ENCODE measurements at regions of chr19 and their contacts with region 1.

Region 1: DNA sequence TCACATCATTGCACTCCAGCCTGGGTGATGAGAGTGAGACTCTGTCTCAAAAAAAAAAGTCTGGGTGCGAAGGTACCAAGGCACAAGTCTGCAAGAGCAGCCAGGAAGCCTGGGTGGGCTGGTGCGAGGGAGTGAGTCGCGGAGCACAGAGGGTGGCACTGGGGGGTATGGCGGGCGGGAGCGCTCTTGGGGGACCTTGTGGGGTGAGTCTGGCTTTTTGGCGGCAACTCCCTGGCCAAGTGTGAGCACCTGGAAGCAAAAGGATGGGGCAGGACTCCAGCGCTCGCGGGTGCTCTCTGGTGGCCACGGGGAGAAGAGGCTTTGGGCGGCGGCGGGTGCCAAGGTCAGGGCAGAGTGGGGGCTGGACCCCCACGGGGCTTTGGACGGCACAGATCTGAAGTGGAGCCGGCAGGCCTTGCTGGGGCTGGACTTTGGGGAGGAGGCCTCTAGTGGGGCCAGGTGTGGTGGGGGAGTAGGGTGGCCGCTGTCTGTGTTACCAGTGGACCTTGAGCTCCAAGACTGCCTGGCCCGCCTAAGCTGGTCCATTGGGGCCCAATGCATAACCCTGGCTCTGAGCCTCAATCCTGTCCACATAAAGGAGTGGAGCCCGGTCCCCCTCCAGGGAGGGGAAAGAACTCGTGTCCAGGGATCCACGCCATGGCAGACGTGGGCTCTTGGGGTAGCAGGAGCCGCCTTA is 1.6 kb downstream of the P2RY11 start:
- DNase-seq: peak; percentile 55 to 86 (median 73)
- H3K4me3 ChIP-seq: no peak overlapping the region
- H3K4me3 Mint-ChIP-seq: peak overlapping the region; percentile 68 to 93 (median 86)
- H3K27ac ChIP-seq: peak overlapping the region; percentile 77
- H3K27ac Mint-ChIP-seq: peak overlapping the region; percentile 90 to 99 (median 98)
- H3K4me1 ChIP-seq: peaks cover 53% of the 10 kb centered on the region
- H3K4me1 Mint-ChIP-seq: peaks cover 27 to 80% (median 38%) of the 10 kb centered on the region in 3 donors
- H3K27me3 ChIP-seq: no peaks in the 10 kb centered on the region
- H3K27me3 Mint-ChIP-seq: peaks cover 0 to 5% of the 10 kb centered on the region in 2 donors

Region 2: GRCh38 chr19:9996541-9996940 is 116.5 kb before region 1 on chr19:
- CTCF ChIA-PET with region 1: no interaction called
- POLR2A ChIA-PET with region 1: no interaction called
- DNase-seq: no peak
- H3K4me3 ChIP-seq: no peak overlapping the region
- H3K4me3 Mint-ChIP-seq: no peak overlapping the region
- H3K27ac ChIP-seq: no peak overlapping the region
- H3K27ac Mint-ChIP-seq: peak overlapping the region in 3 of 8 donors; percentile 4 to 51 (median 21)
- H3K4me1 ChIP-seq: no peaks in the 10 kb centered on the region
- H3K4me1 Mint-ChIP-seq: peaks cover 2 to 8% (median 4%) of the 10 kb centered on the region in 3 donors
- H3K27me3 ChIP-seq: no peaks in the 10 kb centered on the region
- H3K27me3 Mint-ChIP-seq: peaks cover 21 to 37% of the 10 kb centered on the region in 2 donors

Region 3: DNA sequence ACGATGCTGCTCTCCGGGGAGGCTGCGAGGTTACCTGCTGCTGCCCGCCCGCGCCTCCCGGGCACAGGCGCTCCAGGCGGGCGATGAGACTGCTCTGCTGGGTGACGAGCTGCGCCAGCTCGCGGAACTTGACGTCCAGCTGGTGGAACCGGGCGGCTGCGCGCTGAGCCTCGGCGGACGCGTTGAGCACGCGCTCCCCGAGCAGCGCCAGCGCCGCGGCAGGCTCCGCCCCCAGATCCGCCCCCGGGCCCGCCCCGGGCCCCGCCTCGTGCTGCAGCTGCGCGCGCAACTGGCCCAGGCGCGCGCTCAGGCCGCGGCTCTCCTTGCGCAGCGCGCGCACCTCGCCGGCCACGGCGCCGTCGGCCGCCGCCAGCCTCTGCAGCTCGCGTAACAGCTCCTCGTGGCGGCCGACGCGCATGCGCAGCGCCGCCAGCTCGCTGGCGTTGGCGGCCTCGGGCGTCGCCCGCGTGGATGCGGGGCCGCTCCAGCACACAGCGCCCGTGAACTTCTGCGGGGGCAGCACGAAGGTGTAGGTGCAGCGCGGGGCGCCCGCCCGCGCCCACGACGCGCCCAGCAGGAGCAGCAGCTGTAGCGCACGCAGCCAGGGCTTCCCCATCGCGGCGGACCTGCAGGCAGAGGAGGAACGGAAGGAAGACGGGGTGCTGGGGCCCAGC is 17.0 kb before region 1 on chr19:
- CTCF ChIA-PET with region 1: interaction called, 194 read pairs
- POLR2A ChIA-PET with region 1: interaction called, 36 read pairs
- DNase-seq: peak; percentile 85 to 94 (median 89)
- H3K4me3 ChIP-seq: peak overlapping the region; percentile 60
- H3K4me3 Mint-ChIP-seq: peak overlapping the region in 5 of 7 donors; percentile 37 to 72 (median 60)
- H3K27ac ChIP-seq: peak overlapping the region; percentile 67
- H3K27ac Mint-ChIP-seq: peak overlapping the region in 7 of 8 donors; percentile 47 to 79 (median 66)
- H3K4me1 ChIP-seq: peaks cover 28% of the 10 kb centered on the region
- H3K4me1 Mint-ChIP-seq: peaks cover 27 to 47% (median 29%) of the 10 kb centered on the region in 3 donors
- H3K27me3 ChIP-seq: no peaks in the 10 kb centered on the region
- H3K27me3 Mint-ChIP-seq: no peaks in the 10 kb centered on the region

Region 4: DNA sequence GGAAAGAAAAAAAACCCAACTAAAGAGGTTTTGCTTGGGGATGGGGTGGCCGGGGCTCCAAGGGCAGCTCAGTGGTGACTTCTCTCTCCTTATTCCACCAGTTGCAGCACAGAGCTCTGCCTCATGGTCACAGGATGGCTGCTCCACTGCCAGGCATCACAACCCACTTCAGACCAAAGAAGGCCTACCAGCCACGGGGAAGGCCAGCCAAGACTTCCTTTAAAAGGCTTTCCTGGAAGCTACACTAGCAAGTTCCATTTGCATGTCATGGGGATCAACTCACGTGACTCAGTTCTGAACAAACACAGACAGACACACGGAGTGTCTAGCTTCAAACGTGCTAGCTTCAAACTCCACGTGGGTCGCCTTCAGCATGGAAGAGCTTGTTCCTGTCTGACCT is 19.9 kb after region 1 on chr19:
- CTCF ChIA-PET with region 1: interaction called, 10 read pairs
- POLR2A ChIA-PET with region 1: interaction called, 4 read pairs
- DNase-seq: no peak
- H3K4me3 ChIP-seq: no peak overlapping the region
- H3K4me3 Mint-ChIP-seq: no peak overlapping the region
- H3K27ac ChIP-seq: no peak overlapping the region
- H3K27ac Mint-ChIP-seq: peak overlapping the region in 1 of 8 donors; percentile 46
- H3K4me1 ChIP-seq: no peaks in the 10 kb centered on the region
- H3K4me1 Mint-ChIP-seq: peaks cover 0 to 3% (median 2%) of the 10 kb centered on the region in 3 donors
- H3K27me3 ChIP-seq: no peaks in the 10 kb centered on the region
- H3K27me3 Mint-ChIP-seq: no peaks in the 10 kb centered on the region

Region 5: DNA sequence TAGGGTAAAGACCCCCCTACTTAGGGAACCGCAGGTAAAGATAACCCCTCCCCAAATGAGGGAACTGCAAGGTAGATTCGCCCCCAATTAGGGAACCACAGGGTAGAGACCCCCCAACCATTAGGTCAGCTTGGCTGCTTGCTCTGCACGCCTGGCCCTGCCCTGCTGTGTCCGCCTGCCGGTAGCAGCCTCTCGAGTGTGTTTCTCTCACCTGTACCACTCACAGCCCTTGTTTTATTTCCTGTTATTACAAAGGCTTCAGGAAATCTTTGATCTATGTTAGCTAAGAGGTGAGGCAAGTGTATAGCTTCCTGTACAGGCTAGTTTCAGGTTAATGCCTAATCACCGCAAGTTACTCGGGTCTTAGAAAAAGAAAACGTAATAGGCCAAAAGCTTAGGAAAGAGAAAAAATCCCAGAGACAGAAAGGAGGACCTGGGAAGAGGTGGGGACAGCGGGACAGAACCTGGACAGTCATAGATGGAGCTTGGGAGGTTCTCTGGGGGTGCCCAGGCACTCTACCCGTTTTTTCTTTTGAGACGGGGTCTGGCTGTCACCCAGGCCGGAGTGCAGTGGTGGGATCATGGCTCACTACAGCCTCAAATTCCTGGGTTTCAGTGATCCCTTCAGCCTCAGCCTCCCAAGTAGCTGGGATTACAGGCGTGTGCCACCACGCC is 29.8 kb after region 1 on chr19:
- CTCF ChIA-PET with region 1: interaction called, 27 read pairs
- POLR2A ChIA-PET with region 1: interaction called, 10 read pairs
- DNase-seq: peak; percentile 23 to 72 (median 67)
- H3K4me3 ChIP-seq: peak overlapping the region; percentile 49
- H3K4me3 Mint-ChIP-seq: peak overlapping the region; percentile 31 to 88 (median 80)
- H3K27ac ChIP-seq: peak overlapping the region; percentile 71
- H3K27ac Mint-ChIP-seq: peak overlapping the region; percentile 95 to 100 (median 98)
- H3K4me1 ChIP-seq: peaks cover 61% of the 10 kb centered on the region
- H3K4me1 Mint-ChIP-seq: peaks cover 31 to 62% (median 48%) of the 10 kb centered on the region in 3 donors
- H3K27me3 ChIP-seq: no peaks in the 10 kb centered on the region
- H3K27me3 Mint-ChIP-seq: no peaks in the 10 kb centered on the region

Region 6: DNA sequence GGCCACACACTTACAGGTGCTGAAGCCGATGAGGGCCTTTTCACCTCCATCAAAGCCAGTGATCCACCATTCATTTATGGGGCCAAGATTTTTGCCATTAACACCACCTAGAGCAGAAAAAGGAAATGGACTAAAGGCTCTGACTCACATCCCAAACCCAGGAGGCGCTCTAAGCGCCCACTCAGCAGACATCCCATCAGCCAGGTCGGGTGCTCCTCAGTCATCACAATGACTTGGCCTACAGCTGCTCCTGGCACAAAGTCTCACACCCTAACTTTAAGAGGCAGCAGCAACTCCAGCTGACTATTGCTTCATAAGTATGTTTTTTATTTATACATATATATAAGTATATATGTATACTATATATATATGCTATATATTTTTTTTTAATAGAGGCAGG is 42.8 kb after region 1 on chr19:
- CTCF ChIA-PET with region 1: no interaction called
- POLR2A ChIA-PET with region 1: no interaction called
- DNase-seq: no peak
- H3K4me3 ChIP-seq: no peak overlapping the region
- H3K4me3 Mint-ChIP-seq: no peak overlapping the region
- H3K27ac ChIP-seq: no peak overlapping the region
- H3K27ac Mint-ChIP-seq: peak overlapping the region in 1 of 8 donors; percentile 77
- H3K4me1 ChIP-seq: no peaks in the 10 kb centered on the region
- H3K4me1 Mint-ChIP-seq: no peaks in the 10 kb centered on the region
- H3K27me3 ChIP-seq: no peaks in the 10 kb centered on the region
- H3K27me3 Mint-ChIP-seq: no peaks in the 10 kb centered on the region

Measured in CD8-positive, alpha-beta memory T cell (primary cell).